Activated CD4-positive, alpha-beta T cell treated with anti-CD3 and anti-CD28 coated beads for 36 hours (primary cell): ENCODE measurements at regions of chr2 and their contacts with region 1.

Region 1: DNA sequence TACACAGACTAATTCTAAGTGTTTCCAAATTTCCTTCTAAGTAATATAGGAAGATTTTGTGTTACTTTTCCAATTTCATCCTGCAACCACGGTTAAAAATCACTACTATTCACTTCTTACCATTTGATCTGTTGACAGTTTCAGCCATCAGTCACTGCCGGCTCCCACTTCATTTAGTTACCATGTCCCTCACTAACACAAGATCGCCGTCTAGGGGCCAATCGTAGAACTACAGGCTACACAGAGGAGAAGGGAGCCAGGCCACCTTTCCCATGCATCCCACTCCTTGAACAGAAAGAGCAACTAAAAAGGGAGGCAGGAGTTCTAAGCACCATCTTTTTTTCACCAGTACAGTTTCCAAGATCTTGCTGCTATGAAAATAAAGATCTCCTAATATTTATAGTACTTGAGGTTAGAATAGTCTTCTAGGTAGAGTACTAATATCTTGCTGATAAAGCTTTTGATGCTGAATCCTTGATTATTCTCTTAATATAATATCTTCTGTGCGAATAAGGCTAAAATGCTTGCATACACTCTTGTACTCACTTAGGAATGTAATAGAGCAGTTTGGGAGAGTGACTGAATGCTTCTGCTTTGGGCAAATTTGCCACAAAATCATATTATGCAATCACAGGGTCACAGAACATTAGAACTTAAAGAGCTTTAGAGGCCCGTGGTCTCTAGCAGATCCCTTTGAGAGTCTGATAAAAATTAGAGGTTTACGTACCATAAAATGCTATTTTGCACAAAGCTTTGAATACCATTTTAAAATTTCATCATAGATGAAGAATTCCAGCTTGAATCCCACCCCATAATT is 39.5 kb upstream of the CYP1B1 start:
- DNase-seq: peak; percentile 88
- ATAC-seq: peak; percentile 63
- H3K4me3 Mint-ChIP-seq: no peak overlapping the region
- H3K27ac Mint-ChIP-seq: no peak overlapping the region
- H3K4me1 Mint-ChIP-seq: no peaks in the 10 kb centered on the region
- H3K27me3 Mint-ChIP-seq: peaks cover 22% of the 10 kb centered on the region

Region 2: GRCh38 chr2:37890893-37891495 is 224.4 kb before region 1 on chr2:
- CTCF ChIA-PET with region 1: interaction called, 4 read pairs
- POLR2A ChIA-PET with region 1: no interaction called
- intact Hi-C with region 1: loop called in 1 of 2 experiments (anchors 5 kb)
- DNase-seq: peak; percentile 83
- ATAC-seq: peak; percentile 43
- H3K4me3 Mint-ChIP-seq: no peak overlapping the region
- H3K27ac Mint-ChIP-seq: no peak overlapping the region
- H3K4me1 Mint-ChIP-seq: peaks cover 46% of the 10 kb centered on the region
- H3K27me3 Mint-ChIP-seq: peaks cover 8% of the 10 kb centered on the region

Region 3: DNA sequence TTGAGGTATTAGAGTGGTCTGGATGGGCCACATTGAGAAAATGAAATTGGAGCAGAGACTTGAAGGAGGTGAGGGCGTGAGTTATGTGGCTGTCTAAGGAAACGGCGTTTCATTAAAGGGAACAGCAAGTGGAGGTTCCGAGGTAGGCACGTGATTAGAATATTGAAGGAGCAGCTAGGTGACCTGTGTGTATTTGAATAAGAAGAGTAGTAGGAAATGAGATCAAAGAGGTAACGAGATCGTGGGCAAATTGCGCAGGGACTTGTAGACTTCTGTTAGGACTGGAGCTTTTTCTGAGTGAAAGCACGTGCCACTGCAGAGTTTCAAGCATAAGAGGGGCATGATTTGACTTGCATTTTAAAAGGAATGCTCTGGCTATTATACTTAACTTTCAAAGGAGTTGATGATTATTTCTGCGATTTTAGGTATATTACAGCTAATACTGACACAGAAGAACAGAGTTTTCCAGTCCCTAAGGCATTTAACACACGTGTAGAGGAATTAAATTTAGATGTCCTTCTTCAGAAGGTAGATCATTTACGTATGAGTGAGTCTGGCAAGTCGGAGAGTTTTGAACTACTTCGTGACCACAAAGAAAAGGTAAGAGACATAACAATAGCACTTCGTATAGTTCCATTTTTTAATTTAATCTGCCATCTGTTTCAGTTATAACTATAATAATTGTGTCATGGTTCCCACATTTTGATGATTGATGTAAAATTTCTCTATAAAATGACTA is 141.6 kb before region 1 on chr2:
- CTCF ChIA-PET with region 1: interaction called, 10 read pairs
- POLR2A ChIA-PET with region 1: no interaction called
- intact Hi-C with region 1: no loop called
- DNase-seq: no peak
- ATAC-seq: no peak
- H3K4me3 Mint-ChIP-seq: no peak overlapping the region
- H3K27ac Mint-ChIP-seq: no peak overlapping the region
- H3K4me1 Mint-ChIP-seq: no peaks in the 10 kb centered on the region
- H3K27me3 Mint-ChIP-seq: no peaks in the 10 kb centered on the region

Region 4: DNA sequence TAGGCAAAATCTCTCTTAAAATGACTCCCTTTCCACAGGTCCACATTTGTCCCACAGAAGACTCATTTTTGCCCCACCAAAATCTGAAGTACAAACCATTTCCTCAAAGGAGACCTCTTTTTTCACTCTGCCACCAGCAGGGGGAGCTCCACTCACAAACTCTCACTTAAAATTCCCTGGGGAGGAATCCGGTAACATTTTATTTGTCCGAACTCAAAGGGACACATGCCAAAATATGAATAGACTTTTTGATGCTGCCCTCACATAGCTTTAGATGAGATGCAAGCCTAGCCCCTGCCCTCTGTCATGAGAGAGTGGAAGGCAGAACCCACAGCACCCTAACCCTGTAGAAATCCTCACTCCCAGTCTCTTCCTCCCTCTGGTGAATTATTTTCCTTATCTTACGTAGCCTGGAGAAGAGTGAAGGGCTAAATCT is 133.3 kb before region 1 on chr2:
- CTCF ChIA-PET with region 1: interaction called, 4 read pairs
- POLR2A ChIA-PET with region 1: no interaction called
- intact Hi-C with region 1: loop called (anchors 1 kb)
- DNase-seq: peak; percentile 74
- ATAC-seq: no peak
- H3K4me3 Mint-ChIP-seq: no peak overlapping the region
- H3K27ac Mint-ChIP-seq: no peak overlapping the region
- H3K4me1 Mint-ChIP-seq: peaks cover 4% of the 10 kb centered on the region
- H3K27me3 Mint-ChIP-seq: peaks cover 3% of the 10 kb centered on the region

Region 5: DNA sequence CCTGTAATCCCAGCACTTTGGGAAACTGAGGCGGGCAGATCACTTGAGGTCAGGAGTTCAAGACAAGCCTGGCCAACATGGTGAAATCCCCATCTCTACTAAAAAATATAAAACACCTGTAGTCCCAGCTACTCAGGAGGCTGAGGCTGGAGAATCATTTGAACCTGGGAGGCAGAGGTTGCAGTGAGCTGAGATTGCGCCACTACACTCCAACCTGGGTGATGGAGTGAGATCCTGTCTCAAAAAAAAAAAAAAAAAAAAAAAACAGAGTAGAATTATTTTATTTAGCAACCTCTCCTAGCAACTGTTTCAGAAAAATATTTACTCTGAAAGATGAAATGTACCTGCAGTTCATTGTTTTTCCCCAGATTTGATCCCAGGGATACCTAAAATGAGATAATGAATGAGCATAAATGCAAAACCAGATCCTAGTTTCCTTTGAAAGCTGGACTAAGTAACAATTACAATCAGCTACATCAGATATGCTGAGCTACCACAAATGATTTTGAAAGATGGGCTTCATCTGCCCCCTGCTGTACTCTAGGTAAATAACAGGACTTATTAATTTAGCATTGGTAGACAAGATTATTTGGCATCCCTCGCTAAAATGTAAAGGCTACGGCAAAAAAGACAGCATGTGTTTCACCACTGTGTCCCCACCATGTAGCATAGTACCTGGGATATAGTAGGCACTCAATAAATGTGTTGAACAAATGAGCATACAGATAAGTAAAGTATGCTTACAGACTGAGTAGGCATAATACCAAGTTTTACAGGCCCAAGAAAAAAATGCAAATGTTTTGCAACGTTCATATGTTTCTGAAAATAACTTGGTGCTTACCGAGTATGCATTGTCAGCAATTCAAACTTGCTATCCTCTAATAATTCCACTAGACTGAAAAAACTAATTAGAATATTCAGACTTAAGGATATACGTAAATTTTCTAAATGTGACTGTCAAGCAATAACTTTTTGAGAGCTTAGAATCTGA is 159.2 kb after region 1 on chr2:
- CTCF ChIA-PET with region 1: interaction called, 4 read pairs
- POLR2A ChIA-PET with region 1: no interaction called
- intact Hi-C with region 1: loop called in 1 of 2 experiments (anchors 1 kb)
- DNase-seq: peak; percentile 42
- ATAC-seq: no peak
- H3K4me3 Mint-ChIP-seq: no peak overlapping the region
- H3K27ac Mint-ChIP-seq: no peak overlapping the region
- H3K4me1 Mint-ChIP-seq: peaks cover 3% of the 10 kb centered on the region
- H3K27me3 Mint-ChIP-seq: no peaks in the 10 kb centered on the region